Activated CD4-positive, alpha-beta T cell treated with anti-CD3 and anti-CD28 coated beads, Interleukin-2, amount 10 ng/mL, durations not matched to agents 24 days and 14 days (primary cell): ENCODE measurements at regions of chr1 and their contacts with region 1.

Region 1: DNA sequence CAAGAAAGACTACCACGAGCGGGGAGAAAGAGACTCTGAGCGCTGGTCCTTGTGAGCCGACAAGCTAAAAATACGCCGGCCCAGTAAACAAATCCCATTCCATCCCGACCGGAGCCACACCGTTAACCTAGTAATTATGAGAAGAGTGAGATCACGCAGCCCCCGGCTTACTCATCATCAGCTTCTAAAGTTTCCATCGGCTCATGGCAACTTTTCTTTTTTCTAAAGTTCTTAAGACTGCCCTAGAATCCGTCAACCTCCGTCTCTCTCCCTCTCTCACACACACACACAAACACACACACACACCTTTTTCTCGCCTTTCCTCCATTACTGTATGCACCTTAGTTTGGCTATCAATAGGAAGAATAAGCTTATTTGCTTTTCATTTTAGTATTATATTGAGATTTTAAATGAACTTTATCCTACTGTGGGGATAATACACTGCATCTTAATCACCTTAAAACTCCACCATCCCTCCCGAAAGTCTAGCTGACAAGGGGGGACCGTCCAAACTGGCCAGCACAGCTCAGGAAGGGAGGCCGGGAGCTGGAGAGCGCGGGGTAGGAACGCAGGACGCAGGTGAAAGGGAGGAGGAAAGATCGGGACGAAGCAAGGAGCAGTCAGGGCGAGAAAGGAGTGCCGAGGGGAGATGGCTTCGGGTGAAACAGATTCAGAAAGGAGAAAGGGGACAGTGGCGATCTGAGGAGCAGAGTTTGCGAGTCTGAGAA is 697 bp downstream of the OTUD7B start:
- DNase-seq: peak; percentile 81
- H3K4me3 Mint-ChIP-seq: peak overlapping the region; percentile 95
- H3K27ac Mint-ChIP-seq: peak overlapping the region; percentile 98
- H3K4me1 Mint-ChIP-seq: peaks cover 39% of the 10 kb centered on the region
- H3K27me3 Mint-ChIP-seq: peaks cover 1% of the 10 kb centered on the region

Region 2: GRCh38 chr1:149937060-149937705 is 72.6 kb before region 1 on chr1:
- intact Hi-C with region 1: loop called (anchors 5 kb)
- DNase-seq: no peak
- H3K4me3 Mint-ChIP-seq: peak overlapping the region; percentile 64
- H3K27ac Mint-ChIP-seq: peak overlapping the region; percentile 72
- H3K4me1 Mint-ChIP-seq: peaks cover 33% of the 10 kb centered on the region
- H3K27me3 Mint-ChIP-seq: no peaks in the 10 kb centered on the region

Region 3: GRCh38 chr1:149997585-149998262 is 12.1 kb before region 1 on chr1:
- intact Hi-C with region 1: loop called (anchors 1 kb)
- DNase-seq: no peak
- H3K4me3 Mint-ChIP-seq: peak overlapping the region; percentile 38
- H3K27ac Mint-ChIP-seq: peak overlapping the region; percentile 75
- H3K4me1 Mint-ChIP-seq: peaks cover 50% of the 10 kb centered on the region
- H3K27me3 Mint-ChIP-seq: no peaks in the 10 kb centered on the region

Region 4: DNA sequence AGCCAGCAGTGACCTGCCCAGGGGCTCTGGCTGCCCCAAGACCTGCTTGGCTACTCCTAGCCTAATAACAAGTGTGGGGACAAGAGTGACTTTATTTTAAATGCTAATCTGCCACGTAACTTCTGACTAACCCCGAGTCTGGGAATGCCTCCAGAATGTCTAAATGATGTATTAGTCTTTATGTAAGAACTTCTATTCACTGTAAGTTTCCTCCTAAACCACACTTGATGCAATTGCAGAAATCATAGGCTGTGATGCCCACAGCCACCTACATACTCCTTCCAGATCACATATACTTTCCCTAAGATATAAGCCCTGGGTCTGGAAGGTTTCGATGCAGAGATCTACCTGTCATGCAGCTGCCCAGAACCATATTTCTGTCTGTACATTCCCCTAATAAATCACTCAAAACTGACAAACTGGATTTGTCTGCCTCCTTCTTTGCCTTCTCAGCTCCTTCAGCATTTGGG is 51.8 kb after region 1 on chr1:
- intact Hi-C with region 1: no loop called
- DNase-seq: no peak
- H3K4me3 Mint-ChIP-seq: no peak overlapping the region
- H3K27ac Mint-ChIP-seq: no peak overlapping the region
- H3K4me1 Mint-ChIP-seq: peaks cover 9% of the 10 kb centered on the region
- H3K27me3 Mint-ChIP-seq: peaks cover 15% of the 10 kb centered on the region